ENCODE measurements at regions of chr7 and their contacts with region 1.

Region 1: GRCh38 chr7:128455551-128456254 is at the start of gene HILPDA:
- DNase-seq: peak; percentile 90 to 99
- ATAC-seq: peak; percentile 85 to 92 (median 87)
- H3K4me3 ChIP-seq: peak within 1 kb of the TSS; percentile 61
- H3K4me3 Mint-ChIP-seq: peak within 1 kb of the TSS; percentile 91
- H3K27ac ChIP-seq: peak within 1 kb of the TSS; percentile 88
- H3K27ac Mint-ChIP-seq: peak within 1 kb of the TSS; percentile 88
- H3K4me1 ChIP-seq: peaks cover 33% of the 10 kb centered on the region
- H3K4me1 Mint-ChIP-seq: peaks cover 35 to 36% of the 10 kb centered on the region in 2 donors
- H3K27me3 ChIP-seq: no peaks in the 10 kb centered on the region
- H3K27me3 Mint-ChIP-seq: peaks cover 7 to 17% of the 10 kb centered on the region in 2 donors
- CTCF ChIP-seq: no peak
- total RNA-seq, gene HILPDA: 1.9 to 5.1 (median 2.3) TPM

Region 2: GRCh38 chr7:128409596-128410160 is 46.0 kb before region 1 on chr7 and contains the start of gene IMPDH1:
- intact Hi-C with region 1: loop called (anchors 5 kb)
- DNase-seq: peak; percentile 81 to 87
- ATAC-seq: peak; percentile 77 to 89 (median 80)
- H3K4me3 ChIP-seq: peak within 1 kb of the TSS; percentile 99
- H3K4me3 Mint-ChIP-seq: peak within 1 kb of the TSS; percentile 92
- H3K27ac ChIP-seq: peak within 1 kb of the TSS; percentile 96
- H3K27ac Mint-ChIP-seq: peak within 1 kb of the TSS; percentile 73 to 87
- H3K4me1 ChIP-seq: peaks cover 51% of the 10 kb centered on the region
- H3K4me1 Mint-ChIP-seq: peaks cover 32 to 39% of the 10 kb centered on the region in 2 donors
- H3K27me3 ChIP-seq: no peaks in the 10 kb centered on the region
- H3K27me3 Mint-ChIP-seq: no peaks in the 10 kb centered on the region
- CTCF ChIP-seq: no peak
- total RNA-seq, gene IMPDH1: 77.8 to 94.1 (median 89.6) TPM

Region 3: DNA sequence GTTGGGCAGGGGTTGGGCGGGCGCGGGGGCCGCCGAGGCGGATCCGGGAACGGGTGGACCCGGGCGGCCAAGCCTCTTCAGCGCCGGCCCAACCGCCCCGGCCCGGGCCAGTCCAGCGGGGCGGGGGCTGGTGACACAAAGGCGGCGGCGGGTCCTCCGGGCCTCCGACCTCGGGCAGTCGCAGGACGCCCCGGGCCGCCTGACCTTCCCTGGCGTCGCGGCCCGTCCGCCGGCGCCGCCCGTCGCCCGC is 75.1 kb after region 1 on chr7:
- intact Hi-C with region 1: loop called (anchors 10 kb)
- DNase-seq: no peak
- ATAC-seq: no peak
- H3K4me3 ChIP-seq: peak overlapping the region; percentile 49
- H3K4me3 Mint-ChIP-seq: no peak overlapping the region
- H3K27ac ChIP-seq: peak overlapping the region; percentile 64
- H3K27ac Mint-ChIP-seq: no peak overlapping the region
- H3K4me1 ChIP-seq: peaks cover 12% of the 10 kb centered on the region
- H3K4me1 Mint-ChIP-seq: peaks cover 24 to 26% of the 10 kb centered on the region in 2 donors
- H3K27me3 ChIP-seq: no peaks in the 10 kb centered on the region
- H3K27me3 Mint-ChIP-seq: no peaks in the 10 kb centered on the region
- CTCF ChIP-seq: no peak

Measured in natural killer cell (primary cell).